Calu3 (cell line): ENCODE measurements at regions of chr17 and their contacts with region 1.

Region 1: GRCh38 chr17:39754161-39754951 is 16.6 kb downstream of the GRB7 start:
- DNase-seq: peak; percentile 100
- H3K4me3 Mint-ChIP-seq: peak overlapping the region; percentile 63
- H3K27ac Mint-ChIP-seq: peak overlapping the region; percentile 12
- H3K4me1 Mint-ChIP-seq: peaks cover 58% of the 10 kb centered on the region
- H3K27me3 Mint-ChIP-seq: peaks cover 35% of the 10 kb centered on the region
- CTCF ChIP-seq: no peak

Region 2: DNA sequence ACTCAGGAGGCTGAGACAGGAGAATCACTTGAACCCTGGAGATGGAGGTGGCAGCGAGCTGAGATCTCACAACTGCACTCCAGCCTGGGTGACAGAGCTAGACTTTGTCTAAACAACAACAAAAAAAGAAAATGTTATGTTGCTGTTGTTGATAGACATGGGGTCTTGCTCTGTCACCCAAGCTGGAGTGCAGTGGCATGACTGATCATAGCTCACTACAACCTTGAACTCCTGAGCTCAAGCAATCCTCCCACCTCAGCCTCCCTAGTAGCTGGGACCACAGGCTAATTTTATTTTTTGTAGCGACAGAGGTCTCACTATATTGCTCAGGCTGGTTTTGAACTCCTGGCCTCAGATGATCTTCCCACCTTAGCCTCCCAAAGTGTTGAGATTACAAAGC is 807.2 kb before region 1 on chr17:
- CTCF ChIA-PET with region 1: no interaction called
- intact Hi-C with region 1: no loop called
- DNase-seq: no peak
- H3K4me3 Mint-ChIP-seq: no peak overlapping the region
- H3K27ac Mint-ChIP-seq: no peak overlapping the region
- H3K4me1 Mint-ChIP-seq: peaks cover 6% of the 10 kb centered on the region
- H3K27me3 Mint-ChIP-seq: peaks cover 11% of the 10 kb centered on the region
- CTCF ChIP-seq: no peak

Region 3: GRCh38 chr17:39687811-39688518 is 66.4 kb before region 1 on chr17 and contains the start of gene PGAP3:
- CTCF ChIA-PET with region 1: interaction called, 34,714 read pairs
- intact Hi-C with region 1: loop called (anchors 1 kb)
- DNase-seq: peak; percentile 100
- H3K4me3 Mint-ChIP-seq: peak within 1 kb of the TSS; percentile 64
- H3K27ac Mint-ChIP-seq: peak within 1 kb of the TSS; percentile 63
- H3K4me1 Mint-ChIP-seq: peaks cover 27% of the 10 kb centered on the region
- H3K27me3 Mint-ChIP-seq: no peaks in the 10 kb centered on the region
- CTCF ChIP-seq: no peak
- total RNA-seq, gene PGAP3: 1,186 and 1,276 TPM in 2 replicates

Region 4: GRCh38 chr17:39787743-39788484 is 33.6 kb after region 1 on chr17:
- CTCF ChIA-PET with region 1: interaction called, 34,714 read pairs
- intact Hi-C with region 1: no loop called
- DNase-seq: peak; percentile 80
- H3K4me3 Mint-ChIP-seq: no peak overlapping the region
- H3K27ac Mint-ChIP-seq: no peak overlapping the region
- H3K4me1 Mint-ChIP-seq: peaks cover 29% of the 10 kb centered on the region
- H3K27me3 Mint-ChIP-seq: no peaks in the 10 kb centered on the region
- CTCF ChIP-seq: no peak

Region 5: DNA sequence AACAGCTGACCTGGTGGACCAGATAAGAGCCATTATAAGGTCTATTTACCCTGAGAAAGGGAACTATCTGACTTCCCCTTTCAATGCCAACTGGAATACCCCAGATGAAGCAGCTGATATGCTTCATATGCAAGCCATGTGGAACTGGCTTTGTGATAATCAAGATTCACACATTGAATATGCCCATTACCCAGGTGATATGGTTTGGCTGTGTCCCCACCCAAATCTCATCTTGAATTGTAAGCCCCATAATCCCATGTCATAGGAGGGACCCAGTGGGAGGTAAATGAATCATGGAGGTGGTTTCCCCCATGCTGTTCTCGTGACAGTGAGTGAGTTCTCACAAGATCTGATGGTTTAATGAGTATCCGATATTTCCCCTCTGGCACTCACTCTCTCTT is 67.7 kb after region 1 on chr17:
- CTCF ChIA-PET with region 1: interaction called, 1,211 read pairs
- intact Hi-C with region 1: no loop called
- DNase-seq: peak; percentile 59
- H3K4me3 Mint-ChIP-seq: no peak overlapping the region
- H3K27ac Mint-ChIP-seq: no peak overlapping the region
- H3K4me1 Mint-ChIP-seq: peaks cover 9% of the 10 kb centered on the region
- H3K27me3 Mint-ChIP-seq: no peaks in the 10 kb centered on the region
- CTCF ChIP-seq: no peak

Region 6: DNA sequence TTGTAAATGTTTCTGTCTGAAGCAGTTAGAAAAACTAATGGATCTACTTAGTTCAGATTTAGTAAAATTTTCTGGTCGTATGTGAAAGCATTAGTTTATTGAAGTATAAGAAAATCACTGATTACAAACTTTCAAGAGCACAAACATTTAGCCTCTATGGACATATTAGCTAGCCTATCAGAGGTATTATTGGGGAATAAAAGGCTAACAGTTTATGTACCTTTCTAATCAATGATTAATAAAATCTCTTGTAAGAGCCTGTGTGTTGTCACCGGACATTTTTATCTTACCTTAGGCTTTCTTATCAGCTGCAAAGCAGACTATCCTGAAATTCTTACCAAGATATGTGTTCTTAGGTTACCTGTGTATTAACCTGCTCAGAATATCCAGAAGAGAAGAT is 134.8 kb after region 1 on chr17:
- CTCF ChIA-PET with region 1: interaction called, 300 read pairs
- intact Hi-C with region 1: loop called (anchors 1 kb)
- DNase-seq: peak; percentile 82
- H3K4me3 Mint-ChIP-seq: no peak overlapping the region
- H3K27ac Mint-ChIP-seq: no peak overlapping the region
- H3K4me1 Mint-ChIP-seq: peaks cover 26% of the 10 kb centered on the region
- H3K27me3 Mint-ChIP-seq: peaks cover 22% of the 10 kb centered on the region
- CTCF ChIP-seq: no peak

Region 7: DNA sequence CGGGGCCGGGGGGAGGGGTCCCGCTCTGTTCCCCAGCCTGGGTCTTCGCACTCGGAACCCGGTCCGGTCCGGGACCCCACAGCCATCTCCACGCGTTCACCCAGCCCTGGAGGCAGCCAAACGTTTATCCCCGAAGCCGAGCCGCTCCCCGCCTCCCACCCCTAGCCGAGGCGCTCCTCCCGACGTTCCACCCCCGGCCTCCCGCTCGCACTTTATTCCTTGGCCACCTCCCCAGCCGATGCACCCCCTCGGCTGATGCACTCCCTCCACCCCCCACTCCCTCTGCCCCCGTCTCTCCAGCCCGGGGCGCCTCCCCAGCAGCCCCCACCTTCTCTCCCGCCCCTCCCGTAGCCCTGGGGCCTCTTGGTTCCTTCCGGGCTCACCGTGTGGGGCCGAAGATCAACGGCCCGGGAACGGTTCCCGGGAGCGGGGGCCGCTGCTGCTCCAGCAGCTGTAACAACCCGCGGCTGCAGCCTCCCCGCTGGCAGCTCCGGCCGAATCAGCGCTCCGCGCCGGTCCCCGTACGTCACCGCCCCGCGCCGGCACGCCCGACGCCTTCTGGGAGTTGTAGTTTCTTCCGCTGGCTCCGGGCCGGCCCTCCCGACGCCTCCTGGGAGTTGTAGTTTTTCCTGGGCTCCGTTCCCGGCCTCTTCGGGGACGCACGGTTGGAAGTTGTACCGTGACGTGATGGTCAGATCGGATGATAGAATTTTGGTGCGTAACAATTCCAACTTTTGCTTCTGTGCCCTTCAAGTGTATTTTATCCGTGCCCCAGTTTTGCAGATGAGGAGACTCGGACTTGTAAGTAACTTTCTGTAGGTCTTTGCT is 173.0 kb after region 1 on chr17 and contains the starts of genes LRRC3C and ORMDL3:
- CTCF ChIA-PET with region 1: interaction called, 188 read pairs
- intact Hi-C with region 1: loop called (anchors 1 kb)
- DNase-seq: no peak
- H3K4me3 Mint-ChIP-seq: peak within 1 kb of the TSS; percentile 74
- H3K27ac Mint-ChIP-seq: peak within 1 kb of the TSS; percentile 66
- H3K4me1 Mint-ChIP-seq: peaks cover 60% of the 10 kb centered on the region
- H3K27me3 Mint-ChIP-seq: no peaks in the 10 kb centered on the region
- CTCF ChIP-seq: no peak
- total RNA-seq, gene LRRC3C: not detected in 2 replicates
- total RNA-seq, gene ORMDL3: 1,738 and 1,968 TPM in 2 replicates

Region 8: DNA sequence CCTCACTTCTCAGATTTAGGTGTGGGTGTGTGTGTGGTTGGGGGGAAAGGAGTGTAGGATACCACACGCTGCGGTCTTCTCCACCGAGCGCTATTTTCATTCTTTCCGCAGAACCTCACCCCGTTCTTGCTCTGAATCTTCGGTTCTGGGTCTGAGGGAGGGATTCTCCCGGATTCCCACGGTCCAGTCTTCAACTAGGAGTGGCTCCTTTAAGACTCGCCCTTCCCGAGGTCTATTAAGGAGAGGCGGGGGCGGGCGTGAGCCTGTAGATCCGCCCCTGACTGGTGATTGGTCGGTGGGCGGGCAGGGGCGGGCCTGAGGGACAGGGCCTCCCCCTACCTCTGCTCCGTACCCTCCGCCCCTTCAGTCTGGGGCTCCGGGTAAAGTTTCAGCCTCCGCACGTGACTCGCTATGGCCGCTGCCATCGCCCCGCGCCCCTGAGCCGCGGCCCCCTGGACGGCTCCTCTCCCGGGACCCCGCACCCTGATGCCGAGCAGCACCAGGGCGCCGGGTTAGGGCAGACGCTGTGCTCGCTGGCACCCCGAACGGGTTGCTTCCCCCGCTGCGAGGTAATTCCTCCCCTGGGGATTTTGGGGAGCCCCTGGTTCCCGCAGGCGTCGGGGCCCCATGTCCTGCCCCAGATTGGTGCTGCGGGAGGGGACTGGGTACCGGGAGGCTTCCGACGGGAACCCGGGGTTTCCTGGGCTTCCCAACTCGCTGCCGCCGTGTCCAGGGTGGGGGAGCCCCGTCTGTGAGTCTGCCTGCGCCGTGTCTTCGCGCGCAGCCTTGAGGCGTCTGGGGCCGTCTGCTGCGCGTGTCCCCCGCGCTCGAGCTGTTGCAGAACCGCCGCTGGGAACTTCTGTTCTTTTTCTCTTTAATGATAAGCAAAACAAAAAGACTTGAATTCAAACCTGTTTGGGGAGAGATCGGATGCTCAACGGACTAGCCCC is 563.8 kb after region 1 on chr17:
- CTCF ChIA-PET with region 1: no interaction called
- intact Hi-C with region 1: no loop called
- DNase-seq: peak; percentile 100
- H3K4me3 Mint-ChIP-seq: peak overlapping the region; percentile 89
- H3K27ac Mint-ChIP-seq: peak overlapping the region; percentile 71
- H3K4me1 Mint-ChIP-seq: peaks cover 45% of the 10 kb centered on the region
- H3K27me3 Mint-ChIP-seq: no peaks in the 10 kb centered on the region
- CTCF ChIP-seq: no peak